CD4-positive, alpha-beta memory T cell (primary cell): ENCODE measurements at regions of chr1 and their contacts with region 1.

Region 1: GRCh38 chr1:214328770-214329469 is 48.0 kb downstream of the SMYD2 start:
- DNase-seq: peak; percentile 73 to 78 (median 74)
- H3K4me3 ChIP-seq: no peak overlapping the region
- H3K4me3 Mint-ChIP-seq: no peak overlapping the region
- H3K27ac ChIP-seq: no peak overlapping the region
- H3K27ac Mint-ChIP-seq: peak overlapping the region in 3 of 7 donors; percentile 36 to 64 (median 47)
- H3K4me1 ChIP-seq: no peaks in the 10 kb centered on the region
- H3K4me1 Mint-ChIP-seq: peaks cover 0 to 2% (median 0%) of the 10 kb centered on the region in 4 donors
- H3K27me3 ChIP-seq: no peaks in the 10 kb centered on the region
- H3K27me3 Mint-ChIP-seq: no peaks in the 10 kb centered on the region

Region 2: GRCh38 chr1:213669964-213670691 is 658.8 kb before region 1 on chr1:
- CTCF ChIA-PET with region 1: interaction called, 3 read pairs
- POLR2A ChIA-PET with region 1: no interaction called
- intact Hi-C with region 1: loop called (anchors 5 kb)
- DNase-seq: peak; percentile 42 to 60 (median 58)
- H3K4me3 ChIP-seq: no peak overlapping the region
- H3K4me3 Mint-ChIP-seq: peak overlapping the region in 3 of 8 donors; percentile 10 to 56 (median 10)
- H3K27ac ChIP-seq: no peak overlapping the region
- H3K27ac Mint-ChIP-seq: peak overlapping the region in 6 of 7 donors; percentile 25 to 86 (median 60)
- H3K4me1 ChIP-seq: peaks cover 13% of the 10 kb centered on the region
- H3K4me1 Mint-ChIP-seq: peaks cover 4 to 11% (median 9%) of the 10 kb centered on the region in 4 donors
- H3K27me3 ChIP-seq: no peaks in the 10 kb centered on the region
- H3K27me3 Mint-ChIP-seq: peaks cover 0 to 1% of the 10 kb centered on the region in 2 donors

Region 3: DNA sequence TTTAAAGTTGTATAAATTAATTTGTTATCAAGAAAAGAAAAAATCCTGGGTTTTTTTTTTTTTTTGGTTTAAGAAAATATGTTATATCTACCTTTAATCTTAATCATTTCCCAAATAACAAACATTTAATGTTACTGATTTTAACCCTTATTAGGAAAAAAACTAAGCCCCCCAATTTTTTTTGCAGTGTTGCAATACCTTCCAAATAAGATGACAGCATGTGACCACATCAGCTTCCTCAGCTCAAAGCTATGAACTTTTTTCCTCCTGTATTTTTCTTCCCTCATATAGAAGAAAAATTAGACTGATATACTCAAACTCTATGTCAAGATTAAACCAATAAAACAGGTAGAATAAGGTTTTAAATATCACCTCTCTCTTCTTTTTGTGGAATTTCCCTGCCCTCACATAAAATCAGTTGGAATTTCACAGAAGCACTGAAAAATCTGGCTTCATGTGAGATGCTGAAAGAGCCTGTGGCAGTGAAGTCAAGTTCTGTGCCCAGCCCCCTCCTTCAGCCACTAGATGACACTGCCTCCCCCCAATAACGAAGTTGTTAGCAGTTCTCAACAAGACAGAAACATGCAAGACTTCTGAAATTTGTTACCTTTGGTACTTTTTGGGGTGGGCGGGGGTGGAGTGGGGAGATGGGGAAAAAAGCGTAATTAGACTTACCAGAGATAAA is 57.6 kb before region 1 on chr1:
- CTCF ChIA-PET with region 1: interaction called, 53 read pairs
- POLR2A ChIA-PET with region 1: interaction called, 5 read pairs
- intact Hi-C with region 1: no loop called
- DNase-seq: no peak
- H3K4me3 ChIP-seq: no peak overlapping the region
- H3K4me3 Mint-ChIP-seq: no peak overlapping the region
- H3K27ac ChIP-seq: no peak overlapping the region
- H3K27ac Mint-ChIP-seq: no peak overlapping the region
- H3K4me1 ChIP-seq: no peaks in the 10 kb centered on the region
- H3K4me1 Mint-ChIP-seq: no peaks in the 10 kb centered on the region
- H3K27me3 ChIP-seq: peaks cover 7% of the 10 kb centered on the region
- H3K27me3 Mint-ChIP-seq: peaks cover 7 to 10% of the 10 kb centered on the region in 2 donors

Region 4: DNA sequence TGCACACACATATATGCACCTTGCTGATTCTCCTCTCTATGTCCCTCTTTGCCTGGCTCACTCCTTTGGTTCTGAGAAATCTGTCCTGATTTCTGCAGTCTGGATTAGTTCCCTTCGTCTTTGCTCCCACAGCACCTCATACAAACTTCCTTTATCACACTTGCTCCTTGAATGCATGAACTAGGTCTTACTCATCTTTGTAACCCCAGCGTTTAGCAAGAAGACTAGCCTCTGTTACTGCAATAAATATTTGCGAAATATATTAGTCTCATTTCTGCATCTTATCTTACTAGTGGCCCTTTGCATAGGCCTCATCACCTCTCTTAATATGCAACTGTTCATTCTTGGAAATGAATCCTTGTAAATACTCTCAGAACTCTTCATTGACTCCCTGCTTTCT is 36.6 kb before region 1 on chr1:
- CTCF ChIA-PET with region 1: interaction called, 17 read pairs
- POLR2A ChIA-PET with region 1: interaction called, 3 read pairs
- intact Hi-C with region 1: no loop called
- DNase-seq: no peak
- H3K4me3 ChIP-seq: no peak overlapping the region
- H3K4me3 Mint-ChIP-seq: no peak overlapping the region
- H3K27ac ChIP-seq: no peak overlapping the region
- H3K27ac Mint-ChIP-seq: no peak overlapping the region
- H3K4me1 ChIP-seq: peaks cover 8% of the 10 kb centered on the region
- H3K4me1 Mint-ChIP-seq: peaks cover 15 to 47% (median 38%) of the 10 kb centered on the region in 4 donors
- H3K27me3 ChIP-seq: no peaks in the 10 kb centered on the region
- H3K27me3 Mint-ChIP-seq: no peaks in the 10 kb centered on the region

Region 5: DNA sequence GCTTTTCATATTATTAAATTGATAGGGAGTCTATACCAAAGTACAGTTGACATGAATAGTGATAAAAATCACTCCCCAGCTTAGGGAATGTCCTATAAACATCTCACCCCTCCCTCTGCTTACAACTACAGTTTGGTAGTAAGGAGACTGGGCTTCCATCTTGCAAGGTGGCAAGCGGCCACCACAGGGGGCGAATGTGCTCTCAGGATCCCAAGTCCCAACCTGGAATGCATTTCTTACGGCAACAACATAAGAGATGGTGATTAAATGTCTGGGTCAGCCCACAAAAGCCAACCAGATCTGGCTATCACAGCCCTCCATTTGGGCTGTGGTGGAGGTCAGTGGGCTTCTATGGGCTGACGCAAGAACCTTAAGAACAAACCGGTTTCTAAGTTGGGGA is 20.1 kb after region 1 on chr1:
- CTCF ChIA-PET with region 1: interaction called, 30 read pairs
- POLR2A ChIA-PET with region 1: no interaction called
- intact Hi-C with region 1: no loop called
- DNase-seq: no peak
- H3K4me3 ChIP-seq: no peak overlapping the region
- H3K4me3 Mint-ChIP-seq: no peak overlapping the region
- H3K27ac ChIP-seq: no peak overlapping the region
- H3K27ac Mint-ChIP-seq: no peak overlapping the region
- H3K4me1 ChIP-seq: no peaks in the 10 kb centered on the region
- H3K4me1 Mint-ChIP-seq: peaks cover 0 to 4% (median 0%) of the 10 kb centered on the region in 4 donors
- H3K27me3 ChIP-seq: no peaks in the 10 kb centered on the region
- H3K27me3 Mint-ChIP-seq: no peaks in the 10 kb centered on the region

Region 6: GRCh38 chr1:214632091-214632490 is 303.2 kb after region 1 on chr1:
- CTCF ChIA-PET with region 1: interaction called, 25 read pairs
- POLR2A ChIA-PET with region 1: no interaction called
- intact Hi-C with region 1: loop called (anchors 2 kb)
- DNase-seq: peak; percentile 65 to 80 (median 74)
- H3K4me3 ChIP-seq: peak overlapping the region in 1 of 2 donors; percentile 43
- H3K4me3 Mint-ChIP-seq: peak overlapping the region; percentile 33 to 75 (median 60)
- H3K27ac ChIP-seq: no peak overlapping the region
- H3K27ac Mint-ChIP-seq: peak overlapping the region; percentile 75 to 97 (median 94)
- H3K4me1 ChIP-seq: peaks cover 27% of the 10 kb centered on the region
- H3K4me1 Mint-ChIP-seq: peaks cover 11 to 34% (median 24%) of the 10 kb centered on the region in 4 donors
- H3K27me3 ChIP-seq: no peaks in the 10 kb centered on the region
- H3K27me3 Mint-ChIP-seq: no peaks in the 10 kb centered on the region